ENCODE measurements at regions of chr1 and their contacts with region 1.

Region 1: GRCh38 chr1:108746372-108747205 is at the start of gene STXBP3:
- DNase-seq: peak; percentile 100
- H3K4me3 Mint-ChIP-seq: peak within 1 kb of the TSS; percentile 94
- H3K27ac Mint-ChIP-seq: peak within 1 kb of the TSS; percentile 92
- H3K4me1 Mint-ChIP-seq: peaks cover 28% of the 10 kb centered on the region
- H3K27me3 Mint-ChIP-seq: no peaks in the 10 kb centered on the region
- total RNA-seq, gene STXBP3: 29.1 to 30.3 TPM

Region 2: DNA sequence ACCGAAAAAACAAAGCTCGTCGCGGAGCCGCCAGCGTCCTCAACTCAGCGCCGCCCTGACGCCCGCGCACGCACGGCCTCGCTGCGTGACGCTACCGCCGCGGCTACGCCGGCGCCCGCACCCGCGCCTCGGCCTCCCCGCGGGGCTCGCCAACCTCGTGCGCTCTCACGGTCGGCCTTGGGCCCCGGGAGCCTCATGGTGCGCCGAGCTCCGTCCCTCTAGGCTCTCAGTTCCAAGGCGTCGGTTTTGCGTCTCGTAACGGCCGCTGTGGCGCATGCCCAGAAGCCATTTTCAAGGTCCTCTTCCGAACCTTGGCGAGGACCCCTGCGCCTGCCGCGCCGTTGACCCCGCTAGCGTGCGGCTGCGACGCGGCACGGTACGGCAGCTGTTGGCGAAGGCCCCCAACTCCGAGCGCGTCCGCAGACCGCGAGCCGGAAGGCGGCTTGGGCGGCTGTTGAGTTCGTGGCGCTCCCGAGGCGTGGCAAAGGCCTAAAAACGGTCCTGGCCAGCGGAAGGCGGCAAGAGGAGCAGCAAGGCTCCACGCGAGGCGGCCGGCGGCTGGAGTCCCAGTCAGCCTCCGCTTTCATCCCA is 85.5 kb before region 1 on chr1 and contains the start of gene HENMT1:
- CTCF ChIA-PET with region 1: no interaction called
- intact Hi-C with region 1: loop called (anchors 1 kb)
- DNase-seq: peak; percentile 78
- H3K4me3 Mint-ChIP-seq: peak within 1 kb of the TSS; percentile 84
- H3K27ac Mint-ChIP-seq: peak within 1 kb of the TSS; percentile 94
- H3K4me1 Mint-ChIP-seq: peaks cover 25% of the 10 kb centered on the region
- H3K27me3 Mint-ChIP-seq: no peaks in the 10 kb centered on the region
- total RNA-seq, gene HENMT1: 18.7 to 19.3 TPM

Region 3: DNA sequence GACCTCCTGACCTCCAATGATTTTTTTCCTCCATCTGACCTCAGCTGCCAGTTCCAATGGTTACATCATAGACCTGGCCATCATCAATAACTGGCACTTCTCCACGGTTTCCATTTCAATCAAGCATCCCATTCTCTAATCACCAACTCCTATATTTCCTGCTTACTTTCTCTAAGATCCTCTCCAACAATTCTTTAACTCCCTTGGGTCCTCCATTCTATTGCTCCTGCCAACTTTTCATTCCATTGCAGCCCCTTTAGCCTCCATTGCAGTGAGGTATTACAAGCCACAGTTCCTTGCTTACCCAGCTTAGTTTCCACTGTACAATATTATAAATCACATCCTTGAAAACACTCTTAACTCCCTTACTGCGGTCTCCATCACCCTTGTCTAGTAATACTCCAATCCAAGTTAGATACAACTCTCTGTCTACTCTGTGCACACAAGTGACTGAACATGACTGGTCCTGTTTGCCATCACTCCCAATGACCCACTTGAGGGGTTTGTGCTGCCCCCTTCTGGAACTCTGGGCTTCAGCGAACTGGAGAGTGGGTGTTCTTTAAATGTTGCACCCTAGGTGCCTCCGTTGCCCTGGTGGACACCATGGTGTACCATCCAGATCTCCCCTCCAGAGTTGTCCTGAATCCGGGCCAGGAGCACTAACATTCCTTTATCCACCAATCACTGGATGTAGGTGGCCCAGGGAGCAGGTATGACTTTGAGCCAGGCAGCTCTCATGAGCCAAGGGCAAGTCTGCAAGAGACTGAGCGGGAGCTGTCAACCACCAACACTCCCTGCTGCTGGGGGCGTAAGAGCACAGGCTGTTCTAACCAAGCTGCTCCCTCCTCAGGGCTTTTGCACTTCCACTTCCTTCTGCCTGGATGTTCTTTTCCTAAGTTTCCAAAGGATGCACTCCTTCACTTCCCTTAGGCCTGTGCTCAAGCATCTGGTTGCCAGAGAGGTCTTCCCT is 37.6 kb before region 1 on chr1:
- CTCF ChIA-PET with region 1: no interaction called
- intact Hi-C with region 1: loop called (anchors 1 kb)
- DNase-seq: peak; percentile 81
- H3K4me3 Mint-ChIP-seq: no peak overlapping the region
- H3K27ac Mint-ChIP-seq: no peak overlapping the region
- H3K4me1 Mint-ChIP-seq: peaks cover 11% of the 10 kb centered on the region
- H3K27me3 Mint-ChIP-seq: no peaks in the 10 kb centered on the region

Region 4: GRCh38 chr1:108725906-108726305 is 20.7 kb before region 1 on chr1:
- CTCF ChIA-PET with region 1: no interaction called
- intact Hi-C with region 1: loop called (anchors 2 kb)
- DNase-seq: no peak
- H3K4me3 Mint-ChIP-seq: no peak overlapping the region
- H3K27ac Mint-ChIP-seq: no peak overlapping the region
- H3K4me1 Mint-ChIP-seq: no peaks in the 10 kb centered on the region
- H3K27me3 Mint-ChIP-seq: no peaks in the 10 kb centered on the region

Region 5: DNA sequence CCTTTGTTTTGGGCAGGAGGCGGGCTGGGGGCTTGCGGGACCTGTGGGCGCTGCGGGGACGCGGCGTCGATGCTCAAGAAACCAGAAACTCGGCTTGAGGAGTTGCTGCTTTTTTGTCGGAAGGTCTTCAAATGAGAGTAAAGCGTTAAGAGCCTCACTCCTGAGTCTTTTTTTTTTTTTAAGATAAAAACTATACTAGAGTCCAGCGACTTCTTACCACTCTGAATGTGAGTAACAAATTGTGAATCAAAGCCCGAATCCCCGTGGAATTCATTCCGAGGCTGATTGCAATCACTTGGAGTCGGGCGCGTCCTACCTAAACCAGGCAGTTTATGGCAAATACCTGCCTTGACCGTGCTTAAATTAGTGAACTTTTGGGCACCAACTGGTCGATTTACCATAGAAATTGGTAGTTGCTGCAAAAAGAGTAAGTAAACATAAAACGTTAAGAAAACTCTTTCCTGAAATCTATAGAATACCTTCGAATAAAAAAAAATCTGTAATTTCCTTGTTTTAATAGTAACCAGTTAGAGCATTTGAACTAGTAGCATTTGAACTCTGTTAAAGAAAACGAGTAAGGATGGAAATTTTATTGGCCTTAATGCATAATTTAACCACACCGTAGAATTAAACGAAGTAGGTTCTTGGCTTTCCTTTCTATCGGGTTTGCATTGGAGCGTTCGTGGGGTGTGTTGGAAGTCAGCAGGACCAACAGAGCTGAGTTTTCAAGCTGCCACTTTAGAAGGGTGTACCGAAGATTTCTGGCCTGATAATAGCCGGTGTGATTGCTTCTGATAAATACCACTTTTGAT is 131.0 kb after region 1 on chr1:
- CTCF ChIA-PET with region 1: no interaction called
- intact Hi-C with region 1: loop called (anchors 1 kb)
- DNase-seq: no peak
- H3K4me3 Mint-ChIP-seq: peak overlapping the region; percentile 89
- H3K27ac Mint-ChIP-seq: no peak overlapping the region
- H3K4me1 Mint-ChIP-seq: peaks cover 4% of the 10 kb centered on the region
- H3K27me3 Mint-ChIP-seq: peaks cover 25% of the 10 kb centered on the region

Region 6: GRCh38 chr1:108897865-108898720 is 151.5 kb after region 1 on chr1:
- CTCF ChIA-PET with region 1: no interaction called
- intact Hi-C with region 1: loop called (anchors 1 kb)
- DNase-seq: peak; percentile 43
- H3K4me3 Mint-ChIP-seq: no peak overlapping the region
- H3K27ac Mint-ChIP-seq: no peak overlapping the region
- H3K4me1 Mint-ChIP-seq: no peaks in the 10 kb centered on the region
- H3K27me3 Mint-ChIP-seq: peaks cover 2% of the 10 kb centered on the region